ENCODE measurements at regions of chr1 and their contacts with region 1.

Region 1: DNA sequence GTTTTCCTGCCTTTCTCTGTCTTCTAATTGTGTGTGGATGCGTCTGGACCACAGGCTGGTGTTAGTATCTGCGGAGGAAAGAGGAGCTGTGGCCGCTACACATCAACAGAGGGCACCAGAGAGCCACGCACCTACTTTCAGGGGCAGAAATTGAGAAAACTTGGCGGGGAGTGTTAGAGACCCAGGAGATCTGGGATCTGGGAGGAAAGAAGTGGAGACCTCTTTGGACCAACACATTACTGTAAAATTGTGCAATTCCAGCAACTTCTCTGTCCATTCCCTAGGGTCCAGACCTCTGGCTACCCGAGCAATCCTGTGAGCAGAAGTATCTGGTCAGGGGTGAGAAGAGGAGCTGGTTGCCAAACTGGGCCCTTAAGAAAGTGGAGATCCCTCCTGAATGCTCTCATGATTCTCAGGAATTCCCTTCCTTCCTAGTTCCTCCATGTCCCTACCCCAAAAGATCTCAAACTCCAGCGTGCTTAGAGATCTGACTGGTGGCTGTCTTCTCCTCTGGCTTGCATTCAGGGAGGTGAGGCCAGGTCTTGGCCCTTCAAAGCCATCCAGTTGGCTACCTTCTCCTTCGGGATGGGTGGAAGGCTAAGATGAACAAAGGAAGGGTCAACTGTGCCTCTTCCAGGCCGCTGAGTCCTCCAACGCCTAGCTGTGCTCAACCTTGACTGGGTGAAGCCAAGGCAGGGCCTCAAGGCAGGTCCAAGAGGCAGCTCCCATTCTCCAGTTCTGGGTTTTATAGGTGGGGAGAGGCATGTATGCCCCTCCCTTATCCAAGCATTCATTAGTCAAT is 1.2 kb upstream of the KIRREL1 start:
- DNase-seq: peak; percentile 74
- H3K4me3 ChIP-seq: no peak overlapping the region
- H3K27ac ChIP-seq: no peak overlapping the region
- H3K4me1 ChIP-seq: no peaks in the 10 kb centered on the region
- H3K27me3 ChIP-seq: no peaks in the 10 kb centered on the region
- CTCF ChIP-seq: peak; percentile 85

Region 2: GRCh38 chr1:158035976-158036583 is 43.8 kb after region 1 on chr1:
- intact Hi-C with region 1: loop called (anchors 5 kb)
- DNase-seq: peak; percentile 42
- H3K4me3 ChIP-seq: no peak overlapping the region
- H3K27ac ChIP-seq: no peak overlapping the region
- H3K4me1 ChIP-seq: no peaks in the 10 kb centered on the region
- H3K27me3 ChIP-seq: no peaks in the 10 kb centered on the region
- CTCF ChIP-seq: peak; percentile 68